ENCODE measurements at regions of chr15 and their contacts with region 1.

Region 1: DNA sequence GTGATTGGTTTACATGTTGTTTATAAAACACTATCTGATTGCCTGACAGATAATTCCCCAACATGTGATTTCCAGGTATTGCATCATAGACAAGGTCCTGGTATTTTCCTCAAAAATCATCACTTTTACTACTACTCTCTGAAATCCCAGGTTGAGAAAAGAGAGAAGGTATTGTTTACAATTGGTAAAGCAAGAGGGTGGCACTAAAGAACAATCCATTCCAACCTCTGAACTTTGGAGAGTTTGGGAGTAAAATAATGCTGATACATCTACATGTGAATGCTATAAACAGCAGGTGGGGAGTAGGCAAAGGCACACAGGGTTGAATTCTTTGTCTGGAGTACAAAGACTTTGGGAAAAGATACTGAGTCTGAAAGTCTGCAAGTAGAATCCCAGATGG is 134.2 kb downstream of the WDR72 start:
- DNase-seq: no peak
- H3K4me3 ChIP-seq: no peak overlapping the region
- H3K4me3 Mint-ChIP-seq: no peak overlapping the region
- H3K27ac ChIP-seq: no peak overlapping the region
- H3K27ac Mint-ChIP-seq: no peak overlapping the region
- H3K4me1 ChIP-seq: no peaks in the 10 kb centered on the region
- H3K4me1 Mint-ChIP-seq: no peaks in the 10 kb centered on the region
- H3K27me3 ChIP-seq: no peaks in the 10 kb centered on the region
- H3K27me3 Mint-ChIP-seq: peaks cover 0 to 2% of the 10 kb centered on the region in 2 donors

Region 2: DNA sequence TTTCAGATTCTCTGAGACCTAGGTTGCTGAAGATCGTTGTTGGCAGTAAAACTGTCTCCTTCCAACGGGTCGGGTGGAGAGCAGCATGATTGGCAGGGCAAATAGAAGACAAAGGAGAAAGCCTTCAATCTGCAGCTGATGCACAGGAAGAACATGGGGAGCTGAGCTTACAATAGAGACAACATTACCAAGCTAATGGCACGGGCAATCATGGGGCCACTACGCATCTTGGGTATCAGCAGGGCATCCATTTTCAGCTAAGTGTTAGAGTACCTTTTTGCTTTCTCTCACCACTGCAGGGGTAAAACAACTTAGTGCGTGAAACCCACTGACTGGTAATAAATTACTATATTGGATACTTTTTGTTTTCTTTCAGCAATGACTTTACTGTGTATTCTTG is 19.4 kb after region 1 on chr15:
- CTCF ChIA-PET with region 1: no interaction called
- POLR2A ChIA-PET with region 1: no interaction called
- intact Hi-C with region 1: loop called (anchors 2 kb)
- DNase-seq: no peak
- H3K4me3 ChIP-seq: no peak overlapping the region
- H3K4me3 Mint-ChIP-seq: no peak overlapping the region
- H3K27ac ChIP-seq: no peak overlapping the region
- H3K27ac Mint-ChIP-seq: no peak overlapping the region
- H3K4me1 ChIP-seq: no peaks in the 10 kb centered on the region
- H3K4me1 Mint-ChIP-seq: no peaks in the 10 kb centered on the region
- H3K27me3 ChIP-seq: no peaks in the 10 kb centered on the region
- H3K27me3 Mint-ChIP-seq: no peaks in the 10 kb centered on the region

Measured in CD4-positive, alpha-beta memory T cell (primary cell).